Mammary epithelial cell (primary cell): ENCODE measurements at regions of chrX and their contacts with region 1.

Region 1: GRCh38 chrX:81377329-81377728 is 175.4 kb downstream of the SH3BGRL start:
- DNase-seq: peak; percentile 8
- H3K4me3 ChIP-seq: no peak overlapping the region
- H3K27ac ChIP-seq: no peak overlapping the region
- H3K4me1 ChIP-seq: no peaks in the 10 kb centered on the region
- H3K27me3 ChIP-seq: no peaks in the 10 kb centered on the region
- CTCF ChIP-seq: peak; percentile 62 to 67

Region 2: DNA sequence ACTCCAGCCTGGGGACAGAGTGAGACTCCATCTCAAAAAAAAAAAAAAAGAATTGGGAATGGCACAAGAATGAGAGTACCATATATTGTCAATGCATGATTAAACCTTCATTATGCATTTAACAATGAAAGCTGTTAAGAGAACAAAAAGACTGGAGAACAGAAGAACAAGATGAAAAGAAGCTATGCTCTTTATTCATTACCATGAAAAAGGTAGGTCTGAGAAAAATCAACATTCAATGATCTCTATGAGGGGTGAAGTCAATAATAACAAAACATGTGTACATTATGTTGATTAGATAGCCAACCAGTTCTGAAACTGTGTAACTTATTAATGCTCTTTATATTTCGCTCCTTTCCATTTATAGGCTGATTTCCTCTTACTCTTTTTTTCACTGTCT is 668.5 kb before region 1 on chrX:
- CTCF ChIA-PET with region 1: no interaction called
- dilution Hi-C with region 1: no loop called
- in situ Hi-C with region 1: no loop called
- intact Hi-C with region 1: no loop called
- DNase-seq: no peak
- H3K4me3 ChIP-seq: no peak overlapping the region
- H3K27ac ChIP-seq: no peak overlapping the region
- H3K4me1 ChIP-seq: no peaks in the 10 kb centered on the region
- H3K27me3 ChIP-seq: no peaks in the 10 kb centered on the region
- CTCF ChIP-seq: no peak

Region 3: GRCh38 chrX:80876877-80877276 is 500.5 kb before region 1 on chrX:
- CTCF ChIA-PET with region 1: no interaction called
- dilution Hi-C with region 1: no loop called
- in situ Hi-C with region 1: loop called in 1 of 2 experiments (anchors 25 kb)
- intact Hi-C with region 1: loop called (anchors 5 kb)
- DNase-seq: peak; percentile 11
- H3K4me3 ChIP-seq: no peak overlapping the region
- H3K27ac ChIP-seq: no peak overlapping the region
- H3K4me1 ChIP-seq: no peaks in the 10 kb centered on the region
- H3K27me3 ChIP-seq: no peaks in the 10 kb centered on the region
- CTCF ChIP-seq: peak; percentile 47 to 49

Region 4: GRCh38 chrX:81114757-81115156 is 262.6 kb before region 1 on chrX:
- CTCF ChIA-PET with region 1: no interaction called
- dilution Hi-C with region 1: no loop called
- in situ Hi-C with region 1: no loop called
- intact Hi-C with region 1: no loop called
- DNase-seq: no peak
- H3K4me3 ChIP-seq: no peak overlapping the region
- H3K27ac ChIP-seq: no peak overlapping the region
- H3K4me1 ChIP-seq: no peaks in the 10 kb centered on the region
- H3K27me3 ChIP-seq: no peaks in the 10 kb centered on the region
- CTCF ChIP-seq: no peak

Region 5: DNA sequence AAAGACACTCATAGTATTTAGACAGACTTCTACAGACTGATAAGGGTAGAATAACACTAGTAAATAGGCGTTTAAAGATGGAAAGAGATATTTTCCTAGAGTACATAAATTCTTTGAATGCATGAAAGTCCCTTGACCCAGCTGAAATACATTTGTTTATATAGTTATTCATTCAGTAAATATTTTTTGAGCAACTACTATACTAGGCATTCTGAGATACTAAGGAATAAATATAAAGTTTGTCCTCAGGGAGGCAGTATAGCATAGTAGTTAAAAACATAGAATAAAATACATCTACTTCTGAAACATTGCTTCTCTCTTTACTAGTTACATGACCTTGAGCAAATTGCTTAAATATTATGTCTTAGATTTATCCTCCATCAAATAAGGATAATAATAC is 203.0 kb before region 1 on chrX:
- CTCF ChIA-PET with region 1: interaction called, 4 read pairs
- dilution Hi-C with region 1: no loop called
- in situ Hi-C with region 1: loop called (anchors 10 to 25 kb)
- intact Hi-C with region 1: loop called (anchors 1 kb)
- DNase-seq: peak; percentile 14
- H3K4me3 ChIP-seq: no peak overlapping the region
- H3K27ac ChIP-seq: no peak overlapping the region
- H3K4me1 ChIP-seq: no peaks in the 10 kb centered on the region
- H3K27me3 ChIP-seq: no peaks in the 10 kb centered on the region
- CTCF ChIP-seq: peak in 1 of 2 donors; percentile 30

Region 6: DNA sequence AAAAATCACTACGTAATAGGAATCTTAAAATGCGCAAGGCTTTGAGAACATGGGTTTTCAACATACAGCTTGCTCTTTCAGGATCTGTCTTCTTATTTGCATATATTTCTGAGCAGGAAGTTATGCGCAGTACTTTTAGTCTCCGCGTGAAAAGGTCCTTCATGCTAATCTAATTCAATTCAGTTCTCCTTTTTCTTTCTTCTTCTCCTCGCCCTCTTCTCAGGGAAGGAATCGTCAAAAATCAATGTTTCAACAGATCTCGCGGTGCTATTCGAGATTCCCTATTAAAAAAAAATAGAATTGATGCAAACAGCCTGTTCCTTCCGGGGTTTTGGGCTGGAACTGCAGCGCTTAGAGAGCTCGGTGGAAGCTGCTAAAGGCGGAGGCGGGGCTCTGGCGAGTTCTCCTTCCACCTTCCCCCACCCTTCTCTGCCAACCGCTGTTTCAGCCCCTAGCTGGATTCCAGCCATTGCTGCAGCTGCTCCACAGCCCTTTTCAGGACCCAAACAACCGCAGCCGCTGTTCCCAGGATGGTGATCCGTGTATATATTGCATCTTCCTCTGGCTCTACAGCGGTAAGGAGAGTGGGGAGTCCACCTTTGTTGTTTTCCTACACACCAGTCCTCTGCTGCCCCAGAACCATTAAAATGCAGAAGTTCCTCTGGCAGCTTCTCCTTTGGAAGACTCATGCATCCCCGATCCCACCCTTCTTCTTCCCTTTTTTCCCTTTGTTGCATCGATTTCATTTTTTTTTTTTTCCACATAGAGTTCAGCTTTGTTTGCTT is 175.5 kb before region 1 on chrX and contains the starts of genes HMGN5 and SH3BGRL:
- CTCF ChIA-PET with region 1: interaction called, 4 read pairs
- dilution Hi-C with region 1: no loop called
- in situ Hi-C with region 1: loop called in 1 of 2 experiments (anchors 25 kb)
- intact Hi-C with region 1: loop called (anchors 1 kb)
- DNase-seq: peak; percentile 77
- H3K4me3 ChIP-seq: peak within 1 kb of the TSS; percentile 51 to 65 (median 64)
- H3K27ac ChIP-seq: peak within 1 kb of the TSS; percentile 78
- H3K4me1 ChIP-seq: peaks cover 9% of the 10 kb centered on the region
- H3K27me3 ChIP-seq: no peaks in the 10 kb centered on the region
- CTCF ChIP-seq: no peak
- total RNA-seq, gene HMGN5: 1.2 to 2.7 TPM
- total RNA-seq, gene SH3BGRL: 66.5 to 107 TPM

Region 7: GRCh38 chrX:81238172-81238571 is 139.2 kb before region 1 on chrX:
- CTCF ChIA-PET with region 1: no interaction called
- dilution Hi-C with region 1: no loop called
- in situ Hi-C with region 1: no loop called
- intact Hi-C with region 1: no loop called
- DNase-seq: no peak
- H3K4me3 ChIP-seq: no peak overlapping the region
- H3K27ac ChIP-seq: no peak overlapping the region
- H3K4me1 ChIP-seq: peaks cover 3% of the 10 kb centered on the region
- H3K27me3 ChIP-seq: no peaks in the 10 kb centered on the region
- CTCF ChIP-seq: no peak

Region 8: GRCh38 chrX:81367291-81367690 is 10.0 kb before region 1 on chrX:
- CTCF ChIA-PET with region 1: no interaction called
- dilution Hi-C with region 1: no loop called
- in situ Hi-C with region 1: no loop called
- intact Hi-C with region 1: no loop called
- DNase-seq: no peak
- H3K4me3 ChIP-seq: no peak overlapping the region
- H3K27ac ChIP-seq: no peak overlapping the region
- H3K4me1 ChIP-seq: no peaks in the 10 kb centered on the region
- H3K27me3 ChIP-seq: no peaks in the 10 kb centered on the region
- CTCF ChIP-seq: no peak